Naive thymus-derived CD4-positive, alpha-beta T cell (primary cell): ENCODE measurements at regions of chr16 and their contacts with region 1.

Region 1: GRCh38 chr16:49528060-49528865 is 154.7 kb downstream of the C16orf78 start:
- DNase-seq: peak in 6 of 9 donors; percentile 7 to 42 (median 31)
- ATAC-seq: peak; percentile 55
- H3K4me3 ChIP-seq: peak overlapping the region; percentile 56
- H3K4me3 Mint-ChIP-seq: peak overlapping the region; percentile 73 to 95 (median 88)
- H3K27ac ChIP-seq: peak overlapping the region; percentile 66
- H3K27ac Mint-ChIP-seq: peak overlapping the region; percentile 38 to 98 (median 94)
- H3K4me1 ChIP-seq: no peaks in the 10 kb centered on the region
- H3K4me1 Mint-ChIP-seq: peaks cover 6 to 26% (median 16%) of the 10 kb centered on the region in 7 donors
- H3K27me3 ChIP-seq: no peaks in the 10 kb centered on the region
- H3K27me3 Mint-ChIP-seq: peaks cover 0 to 8% (median 0%) of the 10 kb centered on the region in 5 donors

Region 2: GRCh38 chr16:49491771-49492761 is 36.2 kb before region 1 on chr16:
- CTCF ChIA-PET with region 1: no interaction called
- POLR2A ChIA-PET with region 1: no interaction called
- intact Hi-C with region 1: loop called in 1 of 2 experiments (anchors 1 kb)
- DNase-seq: peak in 8 of 9 donors; percentile 20 to 63 (median 40)
- ATAC-seq: peak; percentile 60
- H3K4me3 ChIP-seq: no peak overlapping the region
- H3K4me3 Mint-ChIP-seq: peak overlapping the region in 7 of 10 donors; percentile 12 to 66 (median 39)
- H3K27ac ChIP-seq: no peak overlapping the region
- H3K27ac Mint-ChIP-seq: no peak overlapping the region
- H3K4me1 ChIP-seq: no peaks in the 10 kb centered on the region
- H3K4me1 Mint-ChIP-seq: peaks cover 0 to 15% (median 6%) of the 10 kb centered on the region in 7 donors
- H3K27me3 ChIP-seq: no peaks in the 10 kb centered on the region
- H3K27me3 Mint-ChIP-seq: no peaks in the 10 kb centered on the region